GM23248 (cell line): ENCODE measurements at regions of chr21 and their contacts with region 1.

Region 1: GRCh38 chr21:44939532-44940115 is at the start of gene SLX9:
- DNase-seq: peak; percentile 91
- H3K4me3 ChIP-seq: peak within 1 kb of the TSS; percentile 79
- H3K27ac ChIP-seq: peak within 1 kb of the TSS; percentile 33
- H3K4me1 ChIP-seq: peaks cover 15% of the 10 kb centered on the region
- H3K27me3 ChIP-seq: no peaks in the 10 kb centered on the region
- total RNA-seq, gene SLX9: 25.6 and 34.3 TPM in 2 replicates

Region 2: GRCh38 chr21:43893536-43894205 is 1046.0 kb before region 1 on chr21:
- in situ Hi-C with region 1: no loop called
- DNase-seq: no peak
- H3K4me3 ChIP-seq: no peak overlapping the region
- H3K27ac ChIP-seq: no peak overlapping the region
- H3K4me1 ChIP-seq: no peaks in the 10 kb centered on the region
- H3K27me3 ChIP-seq: no peaks in the 10 kb centered on the region

Region 3: GRCh38 chr21:44510508-44511210 is 429.0 kb before region 1 on chr21:
- in situ Hi-C with region 1: loop called (anchors 25 kb)
- DNase-seq: peak; percentile 62
- H3K4me3 ChIP-seq: no peak overlapping the region
- H3K27ac ChIP-seq: no peak overlapping the region
- H3K4me1 ChIP-seq: no peaks in the 10 kb centered on the region
- H3K27me3 ChIP-seq: 0 out of 2 replicates have a peak, but pooled peaks cover 14% of the 10 kb centered on the region

Region 4: DNA sequence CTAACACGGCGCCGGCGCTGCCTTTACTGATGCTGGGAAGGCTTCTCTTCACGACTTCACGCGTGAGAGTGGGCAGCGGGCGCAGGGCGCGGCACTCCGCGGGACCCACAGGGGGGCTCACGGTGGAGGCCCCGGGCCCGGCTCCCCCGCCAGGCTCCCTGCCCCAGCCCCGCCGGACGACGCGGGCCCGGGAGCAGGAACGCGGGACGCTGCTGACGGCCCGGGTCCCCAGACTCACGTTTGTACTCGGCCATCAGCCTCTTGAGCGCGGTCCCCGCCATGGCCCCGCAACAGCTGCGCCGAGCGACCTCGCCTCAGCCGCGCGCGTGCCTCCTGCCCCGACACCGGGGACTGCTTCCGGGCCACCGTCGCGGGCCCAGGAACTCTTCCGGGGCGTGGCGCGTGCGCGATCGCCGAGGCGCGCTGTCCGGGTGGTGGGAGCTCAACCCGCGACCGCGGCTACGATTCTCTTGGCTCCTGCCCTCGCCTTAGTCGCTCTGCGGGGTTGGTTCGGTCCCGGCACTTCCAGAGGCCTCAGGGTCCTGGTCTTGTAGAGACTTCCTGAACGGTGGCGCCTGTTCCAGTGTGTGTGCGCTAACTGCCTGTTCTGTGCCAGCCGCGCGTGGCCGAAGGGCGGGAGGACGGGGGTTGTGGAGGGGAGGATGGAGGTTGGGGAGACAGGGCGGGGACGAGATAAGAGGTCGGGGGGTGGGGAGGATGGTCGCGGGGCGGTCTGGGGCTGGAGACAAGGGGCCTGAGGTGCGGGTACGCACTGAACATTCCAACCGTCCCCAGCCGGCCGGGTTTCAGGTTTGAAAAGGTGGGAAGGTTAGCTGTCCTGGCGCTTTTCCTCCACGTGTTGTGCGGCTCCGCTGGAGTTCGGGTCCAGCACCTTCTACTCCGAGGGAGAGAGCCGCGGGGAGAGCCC is 137.9 kb before region 1 on chr21 and contains the start of gene UBE2G2:
- in situ Hi-C with region 1: loop called (anchors 10 kb)
- DNase-seq: peak; percentile 91
- H3K4me3 ChIP-seq: peak within 1 kb of the TSS; percentile 97
- H3K27ac ChIP-seq: peak within 1 kb of the TSS; percentile 47
- H3K4me1 ChIP-seq: peaks cover 12% of the 10 kb centered on the region; the same call in 1 of the 2 replicates
- H3K27me3 ChIP-seq: no peaks in the 10 kb centered on the region
- total RNA-seq, gene UBE2G2: 39.1 and 48.6 TPM in 2 replicates